ENCODE measurements at regions of chr3 and their contacts with region 1.

Region 1: GRCh38 chr3:139561959-139562676 is 22.6 kb upstream of the RBP1 start:
- DNase-seq: peak in 1 of 3 donors; percentile 26
- ATAC-seq: peak; percentile 83 to 88
- H3K4me3 ChIP-seq: no peak overlapping the region
- H3K27ac ChIP-seq: no peak overlapping the region
- H3K4me1 ChIP-seq: no peaks in the 10 kb centered on the region
- H3K27me3 ChIP-seq: no peaks in the 10 kb centered on the region

Region 2: DNA sequence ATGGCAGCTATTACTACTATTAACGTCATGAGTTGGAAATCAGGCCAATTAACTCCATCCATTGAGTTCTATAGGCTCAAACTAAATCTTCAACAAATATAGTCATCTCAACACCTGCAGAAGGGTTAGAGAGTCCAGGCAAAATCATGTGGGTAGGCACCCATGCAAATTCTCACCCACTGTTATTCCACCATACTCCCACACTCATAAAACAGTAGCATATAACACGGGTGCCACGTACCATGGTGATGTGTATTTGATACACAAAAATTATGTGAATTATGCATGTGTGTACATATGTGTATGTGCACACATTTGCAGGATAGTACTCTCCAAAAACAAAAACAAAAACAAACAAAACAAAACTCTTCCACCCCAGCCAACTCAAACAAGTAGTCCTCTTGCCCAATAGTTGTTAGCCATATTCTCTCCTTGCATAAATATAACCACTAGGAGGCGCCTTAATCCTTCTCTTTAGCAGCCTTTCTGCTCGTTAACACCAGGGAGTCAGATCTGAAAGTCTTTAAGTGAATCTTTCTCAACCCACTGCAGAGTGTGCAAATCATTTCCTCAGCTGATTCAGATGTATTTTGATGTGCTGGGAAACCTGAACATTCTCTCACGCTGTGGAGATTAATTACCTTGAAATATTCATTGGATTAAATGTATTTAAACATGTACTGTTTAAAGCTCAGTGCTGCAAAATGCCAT is 134.7 kb before region 1 on chr3:
- intact Hi-C with region 1: loop called (anchors 2 to 10 kb)
- DNase-seq: no peak
- ATAC-seq: peak; percentile 81 to 87
- H3K4me3 ChIP-seq: no peak overlapping the region
- H3K27ac ChIP-seq: no peak overlapping the region
- H3K4me1 ChIP-seq: no peaks in the 10 kb centered on the region
- H3K27me3 ChIP-seq: no peaks in the 10 kb centered on the region

Region 3: GRCh38 chr3:139434764-139435307 is 127.3 kb before region 1 on chr3:
- intact Hi-C with region 1: loop called in 2 of 4 experiments (anchors 5 to 10 kb)
- DNase-seq: peak in 1 of 3 donors; percentile 62
- ATAC-seq: peak; percentile 53 to 62
- H3K4me3 ChIP-seq: no peak overlapping the region
- H3K27ac ChIP-seq: peak overlapping the region; percentile 8
- H3K4me1 ChIP-seq: peaks cover 4% of the 10 kb centered on the region
- H3K27me3 ChIP-seq: no peaks in the 10 kb centered on the region

Region 4: DNA sequence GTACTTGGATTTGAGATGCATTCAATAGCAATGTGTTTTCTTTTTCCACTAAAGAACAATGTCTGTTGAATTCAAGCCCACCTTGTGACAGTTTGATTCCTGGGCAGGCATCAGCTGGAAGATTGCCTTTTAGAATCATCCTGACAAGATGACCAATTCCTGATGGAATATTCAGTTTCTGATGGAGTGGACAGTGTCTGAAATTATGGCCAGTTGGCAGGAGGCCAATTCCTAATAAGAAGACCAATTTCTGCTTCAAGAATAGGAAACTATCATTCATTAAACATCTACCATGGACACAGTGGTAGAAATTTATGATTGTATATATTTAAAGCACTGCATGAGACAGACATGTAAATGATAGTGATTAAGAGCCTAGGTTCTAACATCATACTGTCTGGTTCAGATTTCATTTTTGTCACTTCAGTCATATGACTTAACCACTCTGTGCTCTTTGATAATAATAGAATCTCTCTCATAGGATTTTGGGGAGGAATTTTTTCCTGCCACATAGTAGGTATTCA is 506.4 kb after region 1 on chr3:
- intact Hi-C with region 1: no loop called
- DNase-seq: no peak
- ATAC-seq: no peak
- H3K4me3 ChIP-seq: no peak overlapping the region
- H3K27ac ChIP-seq: no peak overlapping the region
- H3K4me1 ChIP-seq: no peaks in the 10 kb centered on the region
- H3K27me3 ChIP-seq: no peaks in the 10 kb centered on the region

Measured in right cardiac atrium (tissue), 5 donors.